IMR-90 (cell line): ENCODE measurements at regions of chr14 and their contacts with region 1.

Region 1: GRCh38 chr14:60091550-60092530 is at the start of gene PCNX4:
- DNase-seq: peak; percentile 98
- ATAC-seq: peak; percentile 89
- H3K4me3 ChIP-seq: peak within 1 kb of the TSS; percentile 68
- H3K27ac ChIP-seq: peak within 1 kb of the TSS; percentile 97
- H3K4me1 ChIP-seq: peaks cover 9% of the 10 kb centered on the region
- H3K27me3 ChIP-seq: no peaks in the 10 kb centered on the region
- CTCF ChIP-seq: no peak
- POLR2A ChIP-seq: peak; percentile 96
- RAD21 ChIP-seq: no peak
- total RNA-seq, gene PCNX4: 128 and 151 TPM in 2 replicates

Region 2: DNA sequence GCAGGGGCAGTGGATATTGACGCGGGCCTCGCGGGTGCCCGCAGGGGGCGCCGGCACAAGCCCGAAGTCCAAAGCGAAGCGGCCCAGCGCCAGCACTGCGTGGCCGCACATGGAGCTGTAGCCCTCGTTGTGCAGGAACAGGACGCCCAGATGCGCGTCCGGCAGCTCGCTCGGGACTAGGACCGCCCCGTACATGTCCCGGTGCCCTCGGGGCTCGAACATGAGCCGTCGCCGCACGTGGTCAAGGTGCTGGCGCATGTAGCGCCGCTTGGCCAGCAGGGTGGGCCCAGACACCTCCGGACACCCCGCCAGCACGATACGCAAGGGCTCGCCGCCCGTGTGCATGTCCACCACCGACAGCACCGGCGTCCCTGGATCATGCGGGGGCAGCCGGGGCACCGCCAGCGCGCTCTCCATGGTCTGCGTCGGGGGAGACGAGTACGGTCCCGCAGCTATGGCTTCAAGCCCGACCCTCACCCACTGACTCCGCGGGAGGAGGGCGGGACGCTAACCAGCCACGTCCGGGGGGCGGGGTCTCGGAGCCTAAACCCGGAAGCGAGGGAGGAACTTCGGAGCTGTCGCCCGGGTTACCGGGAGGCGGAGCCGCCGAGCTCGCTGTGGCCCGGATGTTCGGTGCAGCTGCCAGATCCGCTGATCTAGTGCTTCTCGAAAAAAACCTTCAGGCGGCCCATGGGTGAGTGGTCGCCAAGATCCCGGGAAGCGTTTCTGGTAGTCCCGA is 607.8 kb before region 1 on chr14 and contains the starts of genes JKAMP and L3HYPDH:
- CTCF ChIA-PET with region 1: no interaction called
- POLR2A ChIA-PET with region 1: no interaction called
- dilution Hi-C with region 1: no loop called
- in situ Hi-C with region 1: loop called (anchors 25 kb)
- intact Hi-C with region 1: no loop called
- DNase-seq: peak; percentile 94
- ATAC-seq: peak; percentile 85
- H3K4me3 ChIP-seq: peak within 1 kb of the TSS; percentile 94
- H3K27ac ChIP-seq: peak within 1 kb of the TSS; percentile 94
- H3K4me1 ChIP-seq: peaks cover 9% of the 10 kb centered on the region
- H3K27me3 ChIP-seq: no peaks in the 10 kb centered on the region
- CTCF ChIP-seq: peak; percentile 58
- POLR2A ChIP-seq: peak; percentile 91
- RAD21 ChIP-seq: no peak
- total RNA-seq, gene JKAMP: 62.2 and 124 TPM in 2 replicates
- total RNA-seq, gene L3HYPDH: 40.9 and 54.7 TPM in 2 replicates

Region 3: DNA sequence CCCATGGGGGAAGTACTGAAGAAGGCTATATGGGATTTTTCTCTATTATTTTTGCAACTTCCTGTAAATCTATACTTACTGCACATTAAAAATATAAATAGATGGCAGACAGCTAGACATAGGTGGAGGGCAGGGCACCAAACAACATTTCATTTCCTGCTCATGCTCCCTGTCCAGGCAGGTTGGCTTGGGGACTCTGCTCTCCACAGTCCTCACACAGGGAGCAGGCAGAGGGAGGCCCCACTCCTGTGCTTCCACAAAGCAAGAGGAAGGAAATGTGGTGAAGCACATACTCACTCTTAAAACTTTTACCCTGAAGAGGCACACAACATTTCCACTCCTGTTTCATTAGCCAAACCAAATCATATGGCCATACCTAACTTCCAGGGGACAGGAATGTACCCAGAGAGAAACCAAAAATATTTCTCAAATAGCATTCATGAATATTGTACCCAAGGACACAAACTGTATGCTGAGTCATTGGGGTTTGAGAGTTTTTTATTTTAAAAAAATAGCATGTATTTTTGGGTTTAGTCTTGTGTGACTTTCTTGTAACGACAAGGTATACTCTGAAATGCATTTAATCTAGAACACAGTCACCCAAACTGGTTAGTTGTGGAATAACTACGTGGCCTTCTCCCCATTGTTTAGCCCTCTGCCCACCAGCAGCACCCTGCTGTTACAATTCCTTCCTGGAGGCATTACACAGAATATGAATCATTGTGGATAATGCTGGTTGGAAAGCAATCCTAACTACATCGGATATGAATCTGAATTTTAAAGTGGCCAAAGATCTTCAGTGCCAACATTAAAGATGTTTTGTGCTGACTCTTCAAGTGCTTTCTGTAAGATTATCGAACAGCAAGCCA is 262.1 kb before region 1 on chr14:
- CTCF ChIA-PET with region 1: no interaction called
- POLR2A ChIA-PET with region 1: no interaction called
- dilution Hi-C with region 1: no loop called
- in situ Hi-C with region 1: no loop called
- intact Hi-C with region 1: no loop called
- DNase-seq: no peak
- ATAC-seq: no peak
- H3K4me3 ChIP-seq: no peak overlapping the region
- H3K27ac ChIP-seq: no peak overlapping the region
- H3K4me1 ChIP-seq: no peaks in the 10 kb centered on the region
- H3K27me3 ChIP-seq: no peaks in the 10 kb centered on the region
- CTCF ChIP-seq: no peak
- POLR2A ChIP-seq: no peak
- RAD21 ChIP-seq: no peak

Region 4: DNA sequence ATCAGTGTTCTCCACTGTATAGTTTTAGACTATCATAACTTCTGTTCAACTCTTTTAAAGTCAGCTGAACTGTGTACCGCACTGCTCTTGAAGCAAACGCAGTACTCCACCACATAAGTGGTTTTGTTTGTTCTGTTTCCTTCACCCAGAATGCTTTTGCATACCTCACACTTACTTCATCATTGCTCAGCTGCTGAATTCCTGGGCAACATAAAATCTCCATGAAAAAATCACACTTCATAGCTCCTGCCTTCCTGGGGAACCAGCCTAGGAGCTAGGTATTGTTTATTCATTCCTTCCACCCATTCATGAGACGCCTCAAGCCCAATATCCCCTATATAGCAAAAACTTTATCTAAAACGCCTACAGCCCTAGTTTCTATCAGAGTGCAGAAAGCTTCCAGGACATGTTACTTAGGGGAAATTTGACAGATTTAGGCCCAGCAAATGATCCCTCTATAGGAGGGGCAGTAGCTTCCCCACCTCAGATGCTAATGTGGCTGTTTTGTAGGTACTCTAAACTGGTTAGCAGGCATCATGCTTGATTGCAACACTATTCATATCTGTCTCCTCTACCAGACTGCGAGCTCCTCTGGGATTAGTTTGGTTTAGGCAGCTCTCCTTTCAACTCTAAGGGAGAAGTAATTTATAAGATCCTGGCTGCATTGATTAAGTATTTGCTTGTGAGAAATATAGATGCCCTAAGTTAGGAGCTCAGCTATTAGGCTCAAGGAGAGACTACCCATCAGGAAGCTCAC is 127.4 kb before region 1 on chr14:
- CTCF ChIA-PET with region 1: no interaction called
- POLR2A ChIA-PET with region 1: no interaction called
- dilution Hi-C with region 1: no loop called
- in situ Hi-C with region 1: no loop called
- intact Hi-C with region 1: loop called (anchors 10 kb)
- DNase-seq: peak; percentile 31
- ATAC-seq: peak; percentile 69
- H3K4me3 ChIP-seq: no peak overlapping the region
- H3K27ac ChIP-seq: no peak overlapping the region
- H3K4me1 ChIP-seq: no peaks in the 10 kb centered on the region
- H3K27me3 ChIP-seq: no peaks in the 10 kb centered on the region
- CTCF ChIP-seq: no peak
- POLR2A ChIP-seq: no peak
- RAD21 ChIP-seq: no peak

Region 5: GRCh38 chr14:60151715-60152114 is 59.9 kb after region 1 on chr14:
- CTCF ChIA-PET with region 1: interaction called, 3 read pairs
- POLR2A ChIA-PET with region 1: no interaction called
- dilution Hi-C with region 1: no loop called
- in situ Hi-C with region 1: no loop called
- intact Hi-C with region 1: loop called (anchors 5 kb)
- DNase-seq: peak; percentile 92
- ATAC-seq: peak; percentile 94
- H3K4me3 ChIP-seq: no peak overlapping the region
- H3K27ac ChIP-seq: no peak overlapping the region
- H3K4me1 ChIP-seq: peaks cover 5% of the 10 kb centered on the region
- H3K27me3 ChIP-seq: no peaks in the 10 kb centered on the region
- CTCF ChIP-seq: no peak
- POLR2A ChIP-seq: no peak
- RAD21 ChIP-seq: no peak

Region 6: DNA sequence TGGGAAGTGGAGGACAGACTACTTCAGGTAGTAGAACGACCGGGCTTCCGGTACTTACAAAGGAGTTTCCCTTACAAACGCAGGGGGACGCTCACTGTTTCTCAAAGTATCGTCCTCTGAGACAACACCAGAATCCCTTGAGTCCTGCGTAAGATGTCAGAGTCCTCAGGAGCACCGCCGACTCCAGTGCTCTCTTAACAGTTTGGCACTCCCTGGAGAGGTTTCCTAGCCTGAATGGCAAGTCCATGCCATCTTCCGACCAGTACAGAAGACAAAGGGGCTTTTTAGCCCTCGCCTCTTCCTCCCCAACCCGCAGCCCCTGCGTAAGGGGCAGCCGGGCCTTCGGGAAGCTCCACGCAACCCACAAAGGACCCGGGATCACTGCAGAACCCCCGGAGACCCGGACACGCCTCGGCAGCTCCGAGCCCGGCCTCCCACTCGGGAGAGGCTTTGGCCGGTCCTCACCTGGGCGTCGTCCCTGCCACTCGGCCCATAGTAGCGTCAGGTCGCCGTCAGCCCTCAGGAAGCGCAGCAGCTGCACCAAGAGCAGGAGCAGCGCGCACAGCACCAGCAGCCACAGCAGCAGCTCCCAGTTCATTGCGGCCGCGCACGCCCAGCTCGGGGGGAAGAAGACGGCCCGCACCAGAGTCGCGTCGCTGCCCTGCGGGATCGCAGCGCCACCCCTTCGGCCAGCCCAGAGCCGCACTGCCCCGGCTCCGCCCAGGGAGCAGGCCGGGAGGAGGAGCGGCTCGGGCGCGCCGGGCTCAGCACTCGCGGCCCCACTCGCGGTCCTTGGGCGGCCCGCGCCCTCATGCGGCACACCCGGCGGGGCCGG is 73.1 kb after region 1 on chr14 and contains the start of gene DHRS7:
- CTCF ChIA-PET with region 1: interaction called, 3 read pairs
- POLR2A ChIA-PET with region 1: interaction called, 4 read pairs
- dilution Hi-C with region 1: no loop called
- in situ Hi-C with region 1: loop called (anchors 5 kb)
- intact Hi-C with region 1: loop called (anchors 1 kb)
- DNase-seq: peak; percentile 71
- ATAC-seq: peak; percentile 99
- H3K4me3 ChIP-seq: peak within 1 kb of the TSS; percentile 98
- H3K27ac ChIP-seq: peak within 1 kb of the TSS; percentile 82
- H3K4me1 ChIP-seq: peaks cover 6% of the 10 kb centered on the region
- H3K27me3 ChIP-seq: no peaks in the 10 kb centered on the region
- CTCF ChIP-seq: peak; percentile 49
- POLR2A ChIP-seq: peak; percentile 69
- RAD21 ChIP-seq: peak; percentile 52
- total RNA-seq, gene DHRS7: 50.2 and 56.7 TPM in 2 replicates